ENCODE measurements at regions of chr17 and their contacts with region 1.

Region 1: DNA sequence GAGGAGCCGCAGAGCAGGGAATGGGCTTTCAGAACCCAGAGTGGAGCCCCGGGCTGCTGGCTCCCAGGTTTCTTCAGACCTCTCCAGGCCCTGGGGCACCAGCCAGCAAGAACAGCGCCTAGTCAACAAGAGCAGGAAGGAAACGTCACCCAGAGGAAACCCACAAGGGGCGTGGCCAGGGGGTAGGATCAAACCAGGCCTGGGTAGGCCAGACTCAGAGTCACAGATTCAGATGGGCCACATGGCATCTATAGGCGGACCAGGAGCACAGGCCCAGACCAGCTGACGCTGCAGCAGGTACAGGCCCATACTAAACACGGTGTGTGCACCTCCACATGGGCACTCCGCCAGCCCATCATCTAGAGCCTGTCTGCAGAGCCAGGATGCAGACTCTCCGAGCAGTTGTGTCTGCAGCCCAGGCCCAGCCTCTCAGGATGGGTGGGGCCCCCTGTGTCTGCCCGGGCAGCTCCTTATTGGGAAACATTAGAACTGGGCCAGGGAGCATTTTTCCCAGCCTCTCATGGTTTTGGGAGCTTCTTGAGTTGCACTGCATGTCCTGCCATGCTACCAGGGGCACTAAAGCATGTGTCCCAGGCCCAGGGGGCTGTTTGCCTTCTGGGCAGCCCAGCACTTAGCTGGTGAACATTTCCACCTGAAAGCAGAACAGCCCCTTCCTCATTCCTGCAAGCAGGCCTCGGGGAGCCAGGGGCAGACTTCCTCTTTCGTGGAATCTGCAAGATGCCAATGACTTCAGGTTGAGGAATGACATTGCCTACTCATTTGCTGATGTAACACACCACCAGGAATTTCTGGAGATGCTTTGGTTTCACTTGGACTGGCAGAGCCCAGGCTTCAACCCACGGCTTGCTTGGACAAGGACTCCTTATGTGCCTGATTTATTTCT is at the start of gene NLRP1:
- DNase-seq: peak; percentile 97
- ATAC-seq: peak; percentile 93
- H3K4me3 Mint-ChIP-seq: peak within 1 kb of the TSS; percentile 92
- H3K27ac Mint-ChIP-seq: peak within 1 kb of the TSS; percentile 94
- H3K4me1 Mint-ChIP-seq: peaks cover 62% of the 10 kb centered on the region
- H3K27me3 Mint-ChIP-seq: no peaks in the 10 kb centered on the region
- total RNA-seq, gene NLRP1: 31.2 to 34.0 TPM

Region 2: GRCh38 chr17:6427279-6427781 is 842.7 kb after region 1 on chr17:
- CTCF ChIA-PET with region 1: interaction called, 3 read pairs
- POLR2A ChIA-PET with region 1: no interaction called
- intact Hi-C with region 1: loop called (anchors 1 kb)
- DNase-seq: peak; percentile 77
- ATAC-seq: peak; percentile 80
- H3K4me3 Mint-ChIP-seq: peak overlapping the region; percentile 40
- H3K27ac Mint-ChIP-seq: peak overlapping the region; percentile 47
- H3K4me1 Mint-ChIP-seq: peaks cover 17% of the 10 kb centered on the region
- H3K27me3 Mint-ChIP-seq: peaks cover 13% of the 10 kb centered on the region

Region 3: DNA sequence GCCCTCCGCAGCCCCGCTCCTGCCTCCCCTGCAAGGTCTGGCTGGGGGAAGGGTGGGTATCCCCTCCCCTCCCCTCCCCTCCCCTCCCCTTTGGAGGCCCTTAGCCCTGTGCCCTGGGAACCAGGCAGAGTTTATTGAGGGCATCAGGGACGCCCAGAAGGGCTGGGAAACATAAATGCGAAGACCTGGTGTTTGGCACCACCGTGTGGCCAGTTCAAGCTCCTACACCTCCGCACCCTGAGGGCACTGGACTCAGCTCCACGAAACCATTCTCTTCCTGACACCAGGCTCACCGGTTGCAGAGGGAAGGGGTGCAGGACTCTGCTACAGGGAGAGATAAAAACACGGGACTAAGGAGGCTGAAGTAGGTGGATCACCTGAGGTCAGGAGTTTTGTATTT is 851.3 kb after region 1 on chr17:
- CTCF ChIA-PET with region 1: interaction called, 6 read pairs
- POLR2A ChIA-PET with region 1: no interaction called
- intact Hi-C with region 1: loop called (anchors 1 kb)
- DNase-seq: peak; percentile 78
- ATAC-seq: peak; percentile 97
- H3K4me3 Mint-ChIP-seq: no peak overlapping the region
- H3K27ac Mint-ChIP-seq: no peak overlapping the region
- H3K4me1 Mint-ChIP-seq: no peaks in the 10 kb centered on the region
- H3K27me3 Mint-ChIP-seq: peaks cover 12% of the 10 kb centered on the region

Measured in activated CD4-positive, alpha-beta T cell treated with anti-CD3 and anti-CD28 coated beads for 36 hours (primary cell).